ENCODE measurements at regions of chr20 and their contacts with region 1.

Region 1: DNA sequence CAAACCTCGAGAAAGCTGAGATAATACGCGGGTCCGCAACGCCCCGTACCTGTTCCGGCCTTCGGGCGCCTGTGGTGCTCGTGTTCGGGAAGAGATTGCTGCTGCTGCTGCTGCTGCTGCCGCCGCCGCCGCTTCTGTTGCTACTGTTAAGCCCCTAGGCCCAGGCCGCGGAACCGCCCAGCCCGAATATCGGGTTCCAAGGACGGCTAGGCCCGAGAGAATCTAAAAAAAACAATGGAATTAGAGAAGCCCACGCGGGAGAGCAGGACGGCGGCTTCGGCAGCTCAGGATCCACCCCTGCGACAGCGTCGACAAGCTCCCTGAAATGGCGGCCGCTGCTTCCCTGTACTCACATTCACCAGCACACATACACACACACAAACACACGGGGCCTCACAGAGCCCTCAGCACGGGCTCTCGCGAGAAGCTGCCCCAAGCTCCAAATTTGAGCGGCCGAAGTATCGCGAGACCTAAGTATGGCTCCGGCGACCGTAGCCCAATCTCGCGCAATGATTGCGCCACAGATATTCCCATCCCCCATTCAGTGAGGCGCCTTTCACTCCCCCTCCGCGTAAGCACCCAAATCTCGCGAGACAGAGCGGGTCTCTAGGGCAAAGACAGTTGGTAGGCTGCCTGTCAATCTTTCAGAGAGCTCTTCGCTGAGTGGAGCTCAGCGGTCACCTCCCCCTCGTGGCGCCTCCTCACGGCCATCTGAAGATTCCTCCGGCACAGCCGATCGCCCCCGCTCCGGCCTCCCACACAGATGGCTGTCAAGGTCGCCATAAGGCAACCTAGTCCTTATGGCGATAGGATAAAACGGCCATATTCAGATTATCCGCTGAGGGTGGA is at the start of gene RBM39:
- DNase-seq: peak; percentile 98 to 100
- H3K4me3 ChIP-seq: peak within 1 kb of the TSS; percentile 83 to 96 (median 90)
- H3K27ac ChIP-seq: peak within 1 kb of the TSS; percentile 98
- H3K4me1 ChIP-seq: peaks cover 0 to 4% (median 4%) of the 10 kb centered on the region in 4 experiments; a peak in 3 of 7 replicates
- H3K27me3 ChIP-seq: no peaks in the 10 kb centered on the region
- CTCF ChIP-seq: peak in 2 of 3 experiments; percentile 24 to 37; a peak in 3 of 4 replicates
- EP300 ChIP-seq: peak in 1 of 2 experiments; percentile 57; a peak in 1 of 3 replicates
- POLR2A ChIP-seq: peak; percentile 97 to 99
- RAD21 ChIP-seq: peak in 1 of 2 experiments; percentile 22; a peak in 1 of 4 replicates
- total RNA-seq, gene RBM39: 219 and 220 TPM in 2 replicates

Region 2: DNA sequence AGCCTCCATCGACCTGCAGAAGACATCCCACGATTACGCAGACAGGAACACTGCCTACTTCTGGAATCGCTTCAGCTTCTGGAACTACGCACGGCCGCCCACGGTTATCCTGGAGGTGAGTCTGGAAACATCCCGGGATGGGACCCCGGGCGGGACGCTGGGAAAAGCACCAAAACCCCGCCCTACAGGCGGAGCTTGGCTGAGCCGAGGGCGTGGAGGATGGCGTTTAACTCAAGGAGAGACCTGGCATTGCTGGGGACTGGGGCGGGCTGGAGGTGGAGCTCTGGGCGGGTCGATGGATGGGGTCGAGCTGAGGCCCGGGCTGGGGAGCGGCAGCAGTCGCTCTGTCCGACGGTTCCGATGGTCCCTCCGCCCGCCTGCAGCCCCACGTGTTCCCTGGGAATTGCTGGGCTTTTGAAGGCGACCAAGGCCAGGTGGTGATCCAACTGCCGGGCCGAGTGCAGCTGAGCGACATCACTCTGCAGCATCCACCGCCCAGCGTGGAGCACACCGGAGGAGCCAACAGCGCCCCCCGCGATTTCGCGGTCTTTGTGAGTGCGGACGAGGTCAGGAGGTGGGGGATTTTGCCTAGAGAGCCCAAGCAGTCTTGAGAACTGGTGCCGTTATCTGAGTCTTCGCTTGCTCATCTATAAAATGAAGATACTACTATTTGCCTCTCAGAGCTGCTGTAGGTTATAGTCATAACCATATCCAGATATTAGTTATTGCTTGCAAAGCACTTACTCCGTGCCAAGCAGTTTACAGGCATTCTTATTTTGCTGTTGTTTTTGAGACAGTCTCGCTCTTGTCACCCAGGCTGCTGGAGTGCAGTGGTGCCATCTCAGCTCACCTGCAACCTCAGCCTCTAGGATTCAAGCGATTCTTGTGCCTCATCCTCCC is 122.7 kb before region 1 on chr20:
- CTCF ChIA-PET with region 1: interaction called, 3 read pairs
- POLR2A ChIA-PET with region 1: interaction called, 28 read pairs
- DNase-seq: peak; percentile 73 to 95
- H3K4me3 ChIP-seq: peak overlapping the region; percentile 44 to 63 (median 55)
- H3K27ac ChIP-seq: no peak overlapping the region
- H3K4me1 ChIP-seq: peaks cover 0 to 19% (median 8%) of the 10 kb centered on the region in 4 experiments; a peak in 6 of 7 replicates
- H3K27me3 ChIP-seq: peaks cover 0 to 8% (median 7%) of the 10 kb centered on the region in 4 experiments; a peak in 3 of 7 replicates
- CTCF ChIP-seq: peak; percentile 64 to 79 (median 71)
- EP300 ChIP-seq: no peak
- POLR2A ChIP-seq: peak; percentile 26 to 79
- RAD21 ChIP-seq: peak; percentile 29 to 46; a peak in 3 of 4 replicates

Region 3: GRCh38 chr20:35699127-35699975 is 42.8 kb before region 1 on chr20 and contains the starts of genes NFS1 and ROMO1:
- CTCF ChIA-PET with region 1: interaction called, 8 read pairs
- POLR2A ChIA-PET with region 1: interaction called, 2,341 read pairs
- DNase-seq: peak; percentile 65 to 90
- H3K4me3 ChIP-seq: peak within 1 kb of the TSS; percentile 66 to 99 (median 88)
- H3K27ac ChIP-seq: peak within 1 kb of the TSS; percentile 78
- H3K4me1 ChIP-seq: peaks cover 0 to 2% (median under 1%) of the 10 kb centered on the region in 4 experiments; a peak in 3 of 7 replicates
- H3K27me3 ChIP-seq: no peaks in the 10 kb centered on the region
- CTCF ChIP-seq: peak in 2 of 3 experiments; percentile 32 to 39; a peak in 2 of 4 replicates
- EP300 ChIP-seq: peak in 1 of 2 experiments; percentile 16; a peak in 1 of 3 replicates
- POLR2A ChIP-seq: peak; percentile 83 to 93
- RAD21 ChIP-seq: peak; percentile 7 to 31; a peak in 1 of 4 replicates
- total RNA-seq, gene NFS1: 25.1 and 26.1 TPM in 2 replicates
- total RNA-seq, gene ROMO1: 164 and 173 TPM in 2 replicates

Region 4: DNA sequence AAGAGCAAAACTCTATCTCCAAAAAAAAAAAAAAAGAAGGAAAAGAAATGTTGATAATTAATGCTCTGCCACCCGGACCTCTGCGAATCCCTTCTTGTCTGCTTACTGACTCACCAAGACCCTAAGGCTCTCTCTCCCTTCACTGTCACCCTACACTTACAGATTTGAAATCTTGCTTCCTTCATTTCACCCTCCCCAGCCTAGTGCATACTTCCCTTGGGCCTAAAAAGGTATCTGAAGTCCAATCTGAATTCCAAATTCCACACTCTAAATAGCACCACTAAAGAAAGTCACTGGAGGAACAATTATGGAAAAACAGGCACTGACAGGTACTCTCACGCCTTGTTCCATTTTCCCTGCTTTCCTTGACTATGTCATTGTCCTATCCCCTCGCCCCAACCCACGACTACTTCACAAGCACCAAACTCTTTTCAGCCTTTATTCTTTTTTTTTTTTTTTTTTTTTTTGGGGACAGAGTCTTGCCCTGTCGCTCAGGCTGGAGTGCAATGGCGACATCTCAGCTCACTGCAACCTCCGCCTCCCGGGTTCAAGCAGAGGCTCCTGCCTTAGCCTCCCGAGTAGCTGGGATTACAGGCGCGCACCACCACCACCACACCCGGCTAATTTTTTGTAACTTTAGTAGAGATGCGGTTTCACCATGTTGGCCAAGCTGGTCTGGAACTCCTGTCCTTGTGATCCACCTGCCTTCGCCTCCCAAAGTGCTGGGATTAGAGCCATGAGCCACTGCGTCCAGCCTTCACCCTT is 20.5 kb after region 1 on chr20:
- CTCF ChIA-PET with region 1: interaction called, 5 read pairs
- POLR2A ChIA-PET with region 1: interaction called, 167 read pairs
- DNase-seq: no peak
- H3K4me3 ChIP-seq: no peak overlapping the region
- H3K27ac ChIP-seq: no peak overlapping the region
- H3K4me1 ChIP-seq: no peaks in the 10 kb centered on the region
- H3K27me3 ChIP-seq: no peaks in the 10 kb centered on the region
- CTCF ChIP-seq: no peak
- EP300 ChIP-seq: no peak
- POLR2A ChIP-seq: no peak
- RAD21 ChIP-seq: no peak

Region 5: DNA sequence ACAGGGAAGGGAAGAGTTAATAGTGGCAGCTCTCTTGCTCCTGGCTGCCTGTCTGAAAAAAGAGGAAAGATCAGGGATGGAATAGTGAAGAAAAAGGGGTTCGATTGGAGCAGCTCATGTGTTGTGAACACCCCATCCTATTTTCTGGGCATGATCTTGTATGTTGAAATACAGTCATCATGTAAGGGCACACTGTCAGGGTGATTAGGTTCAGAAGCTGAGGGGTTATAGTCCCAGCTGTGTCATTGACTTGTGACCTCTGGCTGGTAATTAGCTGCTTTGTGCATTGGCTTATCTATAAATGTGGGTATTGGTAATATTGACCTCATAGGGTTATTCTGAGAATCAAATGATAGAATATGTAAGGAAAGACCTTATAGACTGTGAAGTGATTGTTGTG is 59.7 kb after region 1 on chr20:
- CTCF ChIA-PET with region 1: no interaction called
- POLR2A ChIA-PET with region 1: interaction called, 18 read pairs
- DNase-seq: no peak
- H3K4me3 ChIP-seq: no peak overlapping the region
- H3K27ac ChIP-seq: no peak overlapping the region
- H3K4me1 ChIP-seq: no peaks in the 10 kb centered on the region
- H3K27me3 ChIP-seq: no peaks in the 10 kb centered on the region
- CTCF ChIP-seq: no peak
- EP300 ChIP-seq: no peak
- POLR2A ChIP-seq: no peak
- RAD21 ChIP-seq: no peak

Region 6: GRCh38 chr20:35845561-35845960 is 103.4 kb after region 1 on chr20:
- CTCF ChIA-PET with region 1: interaction called, 3 read pairs
- POLR2A ChIA-PET with region 1: interaction called, 14 read pairs
- DNase-seq: no peak
- H3K4me3 ChIP-seq: no peak overlapping the region
- H3K27ac ChIP-seq: no peak overlapping the region
- H3K4me1 ChIP-seq: no peaks in the 10 kb centered on the region
- H3K27me3 ChIP-seq: no peaks in the 10 kb centered on the region
- CTCF ChIP-seq: no peak
- EP300 ChIP-seq: no peak
- POLR2A ChIP-seq: no peak
- RAD21 ChIP-seq: no peak

Region 7: GRCh38 chr20:35954200-35954906 is 212.2 kb after region 1 on chr20 and contains the start of gene SCAND1:
- CTCF ChIA-PET with region 1: interaction called, 6 read pairs
- POLR2A ChIA-PET with region 1: interaction called, 30 read pairs
- DNase-seq: peak; percentile 95
- H3K4me3 ChIP-seq: peak within 1 kb of the TSS; percentile 75 to 95 (median 88)
- H3K27ac ChIP-seq: peak within 1 kb of the TSS; percentile 97
- H3K4me1 ChIP-seq: peaks cover 0 to 3% (median 0%) of the 10 kb centered on the region in 4 experiments; a peak in 2 of 7 replicates
- H3K27me3 ChIP-seq: no peaks in the 10 kb centered on the region
- CTCF ChIP-seq: peak; percentile 95 to 99 (median 98)
- EP300 ChIP-seq: peak in 1 of 2 experiments; percentile 73; a peak in 2 of 3 replicates
- POLR2A ChIP-seq: peak; percentile 89 to 98
- RAD21 ChIP-seq: peak; percentile 47 to 55
- total RNA-seq, gene SCAND1: 73.1 and 86.0 TPM in 2 replicates